ENCODE measurements at regions of chr5 and their contacts with region 1.

Region 1: GRCh38 chr5:160119142-160119904 is at the start of gene PWWP2A:
- DNase-seq: peak; percentile 98
- H3K4me3 Mint-ChIP-seq: peak within 1 kb of the TSS; percentile 97
- H3K27ac Mint-ChIP-seq: peak within 1 kb of the TSS; percentile 96
- H3K4me1 Mint-ChIP-seq: peaks cover 10% of the 10 kb centered on the region
- H3K27me3 Mint-ChIP-seq: no peaks in the 10 kb centered on the region
- total RNA-seq, gene PWWP2A: 15.7 to 17.4 TPM

Region 2: GRCh38 chr5:160008877-160009590 is 110.3 kb before region 1 on chr5 and contains the start of gene TTC1:
- CTCF ChIA-PET with region 1: no interaction called
- POLR2A ChIA-PET with region 1: no interaction called
- intact Hi-C with region 1: loop called (anchors 1 kb)
- DNase-seq: peak; percentile 94
- H3K4me3 Mint-ChIP-seq: peak within 1 kb of the TSS; percentile 99
- H3K27ac Mint-ChIP-seq: peak within 1 kb of the TSS; percentile 95
- H3K4me1 Mint-ChIP-seq: peaks cover 22% of the 10 kb centered on the region
- H3K27me3 Mint-ChIP-seq: no peaks in the 10 kb centered on the region
- total RNA-seq, gene TTC1: 53.6 to 54.3 TPM

Region 3: GRCh38 chr5:160152901-160153300 is 33.6 kb after region 1 on chr5:
- CTCF ChIA-PET with region 1: no interaction called
- POLR2A ChIA-PET with region 1: no interaction called
- intact Hi-C with region 1: loop called (anchors 1 kb)
- DNase-seq: no peak
- H3K4me3 Mint-ChIP-seq: no peak overlapping the region
- H3K27ac Mint-ChIP-seq: no peak overlapping the region
- H3K4me1 Mint-ChIP-seq: peaks cover 20% of the 10 kb centered on the region
- H3K27me3 Mint-ChIP-seq: peaks cover 5% of the 10 kb centered on the region